Naive thymus-derived CD4-positive, alpha-beta T cell (primary cell): ENCODE measurements at regions of chr10 and their contacts with region 1.

Region 1: GRCh38 chr10:484441-484924 is 205.0 kb downstream of the DIP2C start:
- DNase-seq: peak in 5 of 9 donors; percentile 5 to 35 (median 22)
- ATAC-seq: peak; percentile 59
- H3K4me3 ChIP-seq: peak overlapping the region; percentile 64
- H3K4me3 Mint-ChIP-seq: peak overlapping the region; percentile 73 to 95 (median 86)
- H3K27ac ChIP-seq: peak overlapping the region; percentile 76
- H3K27ac Mint-ChIP-seq: peak overlapping the region; percentile 88 to 99 (median 94)
- H3K4me1 ChIP-seq: no peaks in the 10 kb centered on the region
- H3K4me1 Mint-ChIP-seq: peaks cover 5 to 25% (median 13%) of the 10 kb centered on the region in 7 donors
- H3K27me3 ChIP-seq: no peaks in the 10 kb centered on the region
- H3K27me3 Mint-ChIP-seq: no peaks in the 10 kb centered on the region

Region 2: GRCh38 chr10:338518-339311 is 145.8 kb before region 1 on chr10:
- CTCF ChIA-PET with region 1: no interaction called
- POLR2A ChIA-PET with region 1: interaction called, 11 read pairs
- intact Hi-C with region 1: no loop called
- DNase-seq: no peak
- ATAC-seq: no peak
- H3K4me3 ChIP-seq: no peak overlapping the region
- H3K4me3 Mint-ChIP-seq: peak overlapping the region in 1 of 10 donors; percentile 24
- H3K27ac ChIP-seq: no peak overlapping the region
- H3K27ac Mint-ChIP-seq: peak overlapping the region in 5 of 9 donors; percentile 17 to 77 (median 42)
- H3K4me1 ChIP-seq: peaks cover 0 to 3% of the 10 kb centered on the region in 2 donors
- H3K4me1 Mint-ChIP-seq: peaks cover 2 to 12% (median 7%) of the 10 kb centered on the region in 7 donors
- H3K27me3 ChIP-seq: no peaks in the 10 kb centered on the region
- H3K27me3 Mint-ChIP-seq: no peaks in the 10 kb centered on the region

Region 3: DNA sequence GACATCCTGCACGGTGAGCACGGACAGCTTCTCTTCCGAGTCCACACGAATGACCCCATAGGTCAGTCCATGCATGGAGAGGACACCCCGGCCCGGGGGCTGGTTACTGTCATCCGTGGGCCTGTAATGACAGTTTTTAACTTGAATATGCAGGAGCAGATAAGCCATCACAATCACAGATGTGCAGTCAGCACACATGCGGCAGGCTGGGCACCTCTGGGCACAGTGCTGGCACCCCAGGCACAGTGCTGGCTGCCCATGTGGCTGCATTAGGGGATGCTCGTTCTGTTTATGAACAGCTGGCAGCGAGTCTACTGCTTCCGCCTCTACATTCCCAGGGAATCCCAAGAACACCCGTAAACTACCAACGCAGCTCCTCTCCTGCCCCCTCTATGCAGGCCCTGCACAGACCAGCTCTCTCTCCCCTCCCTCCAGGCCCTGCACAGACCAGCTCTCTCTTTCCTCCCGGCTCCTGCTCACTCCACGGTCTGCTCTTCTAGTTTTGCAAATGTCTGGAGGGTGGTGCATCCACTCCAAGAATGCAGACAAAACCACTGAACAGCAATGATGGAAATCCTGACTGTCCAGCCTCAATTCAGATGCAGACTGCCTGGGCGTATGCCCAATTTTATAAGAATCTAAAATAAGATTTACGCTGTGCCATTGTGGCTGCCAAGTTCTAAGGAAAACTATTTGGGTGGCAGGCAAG is 114.8 kb before region 1 on chr10:
- CTCF ChIA-PET with region 1: no interaction called
- POLR2A ChIA-PET with region 1: no interaction called
- intact Hi-C with region 1: no loop called
- DNase-seq: no peak
- ATAC-seq: no peak
- H3K4me3 ChIP-seq: no peak overlapping the region
- H3K4me3 Mint-ChIP-seq: no peak overlapping the region
- H3K27ac ChIP-seq: no peak overlapping the region
- H3K27ac Mint-ChIP-seq: no peak overlapping the region
- H3K4me1 ChIP-seq: no peaks in the 10 kb centered on the region
- H3K4me1 Mint-ChIP-seq: peaks cover 0 to 4% (median 0%) of the 10 kb centered on the region in 7 donors
- H3K27me3 ChIP-seq: no peaks in the 10 kb centered on the region
- H3K27me3 Mint-ChIP-seq: peaks cover 0 to 4% (median 0%) of the 10 kb centered on the region in 5 donors